ENCODE measurements at regions of chr7 and their contacts with region 1.

Region 1: DNA sequence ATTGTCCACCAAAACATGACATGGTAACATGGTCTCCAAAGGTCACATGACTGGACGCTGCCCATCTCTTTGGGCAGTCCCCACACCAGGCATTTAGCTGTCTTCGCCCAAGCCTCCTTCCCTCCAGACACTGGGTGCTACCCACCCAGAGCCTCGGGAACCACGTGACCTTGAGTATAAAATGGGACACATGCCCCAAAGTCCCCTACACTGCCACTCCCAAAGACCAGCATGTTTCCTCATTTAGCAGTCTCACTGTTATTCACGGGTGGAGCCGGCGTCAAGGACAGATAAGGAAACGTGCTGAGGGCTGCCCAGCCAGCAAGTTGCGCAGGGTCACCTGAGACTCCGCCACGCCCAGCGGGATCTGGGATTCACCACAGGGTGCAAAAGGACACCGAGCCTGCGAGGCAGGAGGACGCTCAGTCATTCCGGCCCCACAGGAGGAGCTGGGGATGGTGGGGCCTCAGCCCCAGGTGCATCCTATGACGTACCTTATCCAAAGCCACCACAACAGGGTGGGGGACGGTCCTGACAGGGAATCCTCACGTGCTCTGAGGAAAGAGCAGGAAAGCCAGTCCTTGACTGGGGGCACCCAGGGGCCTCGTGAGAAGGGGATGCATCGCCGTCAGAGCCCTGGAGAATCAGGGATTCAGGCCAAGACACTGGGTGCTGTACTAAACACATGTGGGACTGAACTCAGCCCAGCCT is 226.9 kb downstream of the TNS3 start:
- DNase-seq: peak in 4 of 5 donors; percentile 50 to 67 (median 58)
- ATAC-seq: peak; percentile 70 to 81 (median 76)
- H3K4me3 ChIP-seq: no peak overlapping the region
- H3K27ac ChIP-seq: peak overlapping the region in 1 of 12 donors; percentile 37
- H3K4me1 ChIP-seq: peaks cover 0 to 24% (median 11%) of the 10 kb centered on the region in 12 donors
- H3K27me3 ChIP-seq: no peaks in the 10 kb centered on the region
- CTCF ChIP-seq: no peak
- POLR2A ChIP-seq: no peak

Region 2: DNA sequence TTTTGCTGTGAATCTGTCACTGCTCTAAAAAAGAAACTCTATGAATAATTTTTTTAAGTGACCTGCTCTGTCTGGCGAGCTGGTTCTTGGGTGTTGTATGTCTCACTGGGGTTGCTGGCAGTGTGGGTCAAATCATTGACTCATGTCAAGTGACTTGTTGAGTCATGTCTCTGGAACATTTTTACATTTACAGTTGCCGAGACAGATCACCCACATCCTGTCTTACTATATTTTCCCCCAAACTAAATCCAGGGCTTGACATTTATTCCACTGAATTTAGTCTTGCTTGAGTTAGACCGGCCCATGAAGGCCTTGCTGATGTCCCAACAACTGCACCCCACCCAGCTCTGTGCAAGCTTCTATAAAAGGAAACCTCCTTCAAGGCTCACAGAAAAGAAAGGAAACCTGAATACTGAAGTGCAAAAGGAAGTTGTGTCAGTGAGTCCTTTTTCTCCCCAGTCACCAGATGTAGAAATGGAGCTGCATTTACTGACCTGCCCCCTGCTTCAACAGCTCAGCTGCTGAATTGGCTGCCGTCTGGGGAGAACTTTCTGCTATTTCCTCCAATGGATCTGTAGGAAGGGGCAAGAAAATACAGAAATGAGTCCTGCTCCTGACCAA is 63.4 kb before region 1 on chr7:
- intact Hi-C with region 1: no loop called
- DNase-seq: no peak
- ATAC-seq: peak in 3 of 4 donors; percentile 11 to 63 (median 45)
- H3K4me3 ChIP-seq: no peak overlapping the region
- H3K27ac ChIP-seq: peak overlapping the region in 8 of 12 donors; percentile 3 to 61 (median 24)
- H3K4me1 ChIP-seq: peaks cover 5 to 59% (median 31%) of the 10 kb centered on the region in 12 donors
- H3K27me3 ChIP-seq: no peaks in the 10 kb centered on the region
- CTCF ChIP-seq: no peak
- POLR2A ChIP-seq: no peak

Region 3: DNA sequence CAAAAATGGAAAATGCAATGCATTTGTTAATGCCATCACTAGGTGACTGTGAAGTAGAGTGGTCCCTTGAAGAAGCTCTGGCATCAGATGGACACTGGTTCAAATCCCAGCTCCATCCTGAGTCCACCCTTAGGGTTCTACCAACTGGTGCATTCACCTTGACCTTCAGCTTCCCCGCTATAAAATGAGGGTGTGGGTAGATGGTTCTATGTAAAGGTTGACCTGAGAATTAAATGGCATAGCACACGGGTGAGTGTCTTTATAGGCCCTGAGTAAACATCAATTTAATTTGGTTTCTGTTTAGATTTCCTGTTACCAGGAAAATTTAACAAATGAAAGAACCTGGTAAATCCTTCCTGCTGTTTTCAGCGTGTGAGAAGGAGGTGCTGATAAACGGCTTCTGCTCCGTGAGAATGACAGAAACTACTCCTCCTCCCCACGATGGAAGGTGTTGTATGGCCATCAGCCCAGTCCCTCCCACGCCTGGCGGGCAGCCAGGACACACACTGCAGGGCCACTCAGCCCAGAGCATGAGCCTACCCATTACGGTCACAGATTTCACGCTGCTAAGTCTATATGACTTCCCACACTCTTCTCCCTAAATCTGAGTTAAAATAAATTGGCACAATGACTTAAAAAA is 16.9 kb after region 1 on chr7:
- intact Hi-C with region 1: loop called in 1 of 10 experiments (anchors 2 kb)
- DNase-seq: peak; percentile 83 to 91 (median 85)
- ATAC-seq: peak; percentile 80 to 89 (median 88)
- H3K4me3 ChIP-seq: no peak overlapping the region
- H3K27ac ChIP-seq: peak overlapping the region in 6 of 12 donors; percentile 21 to 51 (median 33)
- H3K4me1 ChIP-seq: peaks cover 0 to 62% (median 35%) of the 10 kb centered on the region in 12 donors
- H3K27me3 ChIP-seq: no peaks in the 10 kb centered on the region
- CTCF ChIP-seq: no peak
- POLR2A ChIP-seq: no peak

Measured in heart left ventricle (tissue), 16 donors.